CD4-positive, alpha-beta memory T cell (primary cell): ENCODE measurements at regions of chr3 and their contacts with region 1.

Region 1: DNA sequence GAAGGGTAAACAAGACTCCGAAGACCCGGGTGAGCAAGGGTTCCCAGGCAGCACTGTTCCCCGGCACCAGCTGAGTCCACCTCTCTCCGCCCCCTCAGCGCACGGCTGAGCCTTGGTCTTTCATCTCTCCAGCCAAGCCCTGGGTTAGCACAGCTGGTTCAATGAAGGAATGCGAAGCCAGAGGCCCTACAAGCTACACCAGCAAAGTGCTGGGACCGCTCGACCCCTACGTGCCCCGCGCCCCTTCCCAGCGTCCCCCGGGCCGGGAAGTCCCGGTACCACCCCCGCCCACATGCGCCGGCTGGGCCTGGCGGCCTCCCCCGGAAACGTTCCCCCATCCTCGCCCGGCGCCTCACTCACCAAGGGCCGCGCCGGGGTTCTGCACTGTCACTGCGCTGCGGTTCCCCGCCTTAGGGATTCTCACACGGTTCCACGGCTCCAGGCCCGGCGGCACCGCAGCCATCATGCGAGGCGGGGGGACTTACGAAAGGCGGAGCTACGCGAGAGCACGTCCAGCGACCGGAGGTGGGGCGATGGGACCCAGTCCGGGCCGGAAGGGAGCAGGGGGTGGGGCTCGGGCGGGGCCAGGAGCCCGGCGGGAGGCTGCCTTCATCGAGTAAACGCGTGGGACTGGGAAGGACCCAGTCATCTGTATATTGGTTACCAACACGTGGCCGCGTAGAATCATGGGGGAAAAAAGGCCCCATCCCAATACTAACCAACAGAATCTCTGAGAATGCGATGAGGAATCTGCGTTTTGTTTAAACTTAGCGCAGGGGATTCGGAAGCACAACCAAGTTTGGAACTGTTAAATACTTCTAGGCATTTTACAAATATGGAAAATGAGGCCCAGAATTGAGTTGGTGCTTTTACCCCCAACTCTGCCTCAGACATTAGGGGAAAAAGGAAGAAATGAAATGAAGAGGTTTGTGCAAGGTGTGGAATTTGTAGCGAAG is 28.7 kb downstream of the GTPBP8 start:
- DNase-seq: peak; percentile 76 to 89 (median 81)
- H3K4me3 ChIP-seq: peak overlapping the region; percentile 59 to 89
- H3K4me3 Mint-ChIP-seq: peak overlapping the region; percentile 92 to 97 (median 96)
- H3K27ac ChIP-seq: peak overlapping the region; percentile 89
- H3K27ac Mint-ChIP-seq: peak overlapping the region; percentile 91 to 98 (median 95)
- H3K4me1 ChIP-seq: peaks cover 45% of the 10 kb centered on the region
- H3K4me1 Mint-ChIP-seq: peaks cover 42 to 76% (median 61%) of the 10 kb centered on the region in 4 donors
- H3K27me3 ChIP-seq: no peaks in the 10 kb centered on the region
- H3K27me3 Mint-ChIP-seq: no peaks in the 10 kb centered on the region

Region 2: DNA sequence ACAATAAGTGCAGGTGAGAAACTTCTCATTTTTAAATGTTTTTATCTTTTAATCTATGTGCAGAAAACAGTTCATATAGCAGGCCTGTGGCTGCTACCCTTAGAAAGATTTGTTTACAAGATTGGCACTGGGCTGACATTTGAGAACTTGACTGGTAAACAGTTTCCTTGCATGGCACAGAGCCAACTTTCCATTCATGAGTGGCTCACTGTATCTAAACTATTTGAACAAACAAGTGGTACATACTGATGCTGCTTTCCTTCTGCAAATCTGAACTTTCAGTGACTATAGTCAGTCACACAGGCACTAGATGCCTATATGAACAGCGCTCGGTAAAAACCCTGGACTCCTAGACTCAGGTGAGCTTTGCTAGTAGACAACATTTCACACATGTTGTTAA is 35.0 kb before region 1 on chr3:
- CTCF ChIA-PET with region 1: interaction called, 4 read pairs
- POLR2A ChIA-PET with region 1: interaction called, 11 read pairs
- intact Hi-C with region 1: loop called (anchors 5 kb)
- DNase-seq: peak; percentile 47 to 84 (median 54)
- H3K4me3 ChIP-seq: no peak overlapping the region
- H3K4me3 Mint-ChIP-seq: peak overlapping the region in 4 of 8 donors; percentile 7 to 45 (median 32)
- H3K27ac ChIP-seq: peak overlapping the region; percentile 1
- H3K27ac Mint-ChIP-seq: peak overlapping the region; percentile 53 to 95 (median 77)
- H3K4me1 ChIP-seq: peaks cover 39% of the 10 kb centered on the region
- H3K4me1 Mint-ChIP-seq: peaks cover 37 to 65% (median 51%) of the 10 kb centered on the region in 4 donors
- H3K27me3 ChIP-seq: no peaks in the 10 kb centered on the region
- H3K27me3 Mint-ChIP-seq: no peaks in the 10 kb centered on the region

Region 3: DNA sequence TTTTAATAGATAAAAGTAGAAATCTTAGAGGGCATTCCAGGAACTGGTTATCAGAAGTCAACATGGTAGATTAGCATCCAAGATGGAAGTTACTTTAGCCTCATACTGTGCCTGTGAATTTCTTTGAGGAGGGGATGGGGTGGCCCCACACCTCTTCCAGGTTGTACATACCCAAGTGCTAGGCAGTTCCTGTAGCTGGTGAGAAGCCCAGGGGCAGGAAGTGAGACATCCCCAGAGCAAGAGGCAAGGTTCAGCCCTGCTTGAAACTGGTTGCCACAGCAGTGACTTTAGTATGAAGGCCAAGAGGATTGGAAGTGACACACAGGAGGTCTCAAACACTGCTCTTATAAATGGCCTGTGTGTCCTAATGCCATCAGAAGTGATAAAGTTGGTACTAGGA is 16.8 kb before region 1 on chr3:
- CTCF ChIA-PET with region 1: interaction called, 5 read pairs
- POLR2A ChIA-PET with region 1: interaction called, 33 read pairs
- intact Hi-C with region 1: loop called (anchors 1 kb)
- DNase-seq: peak; percentile 26 to 66 (median 29)
- H3K4me3 ChIP-seq: no peak overlapping the region
- H3K4me3 Mint-ChIP-seq: peak overlapping the region in 4 of 8 donors; percentile 11 to 57 (median 23)
- H3K27ac ChIP-seq: peak overlapping the region; percentile 29
- H3K27ac Mint-ChIP-seq: peak overlapping the region; percentile 75 to 89 (median 84)
- H3K4me1 ChIP-seq: peaks cover 66% of the 10 kb centered on the region
- H3K4me1 Mint-ChIP-seq: peaks cover 45 to 64% (median 55%) of the 10 kb centered on the region in 4 donors
- H3K27me3 ChIP-seq: no peaks in the 10 kb centered on the region
- H3K27me3 Mint-ChIP-seq: no peaks in the 10 kb centered on the region

Region 4: DNA sequence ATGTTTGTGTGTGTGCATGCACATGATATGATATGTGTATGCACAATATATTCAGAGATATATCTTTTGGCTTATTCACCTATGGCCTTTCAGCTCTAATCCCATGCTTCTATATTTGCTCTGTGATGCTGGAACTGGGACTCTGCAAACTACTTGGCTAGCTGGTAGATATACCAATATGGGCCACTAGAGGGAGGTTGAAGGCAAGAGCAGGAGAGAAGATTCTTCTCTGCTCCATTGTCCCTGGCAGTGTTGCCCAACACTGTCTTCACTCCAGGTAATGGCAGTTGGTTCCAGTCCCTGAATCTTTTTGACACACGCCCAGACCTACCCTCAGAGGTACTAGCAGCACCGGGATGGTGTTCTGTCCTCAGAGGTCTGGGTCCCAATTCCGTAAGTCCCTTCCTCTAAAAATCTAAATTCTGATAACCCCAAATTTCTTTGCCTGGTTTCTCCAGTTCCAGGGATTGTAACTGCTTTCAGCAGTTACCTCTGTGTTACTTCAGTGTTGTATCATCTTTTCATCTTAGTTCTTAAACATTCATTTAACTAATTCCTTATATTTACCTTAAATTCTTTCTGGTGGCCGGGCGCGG is 16.0 kb after region 1 on chr3:
- CTCF ChIA-PET with region 1: interaction called, 23 read pairs
- POLR2A ChIA-PET with region 1: interaction called, 4 read pairs
- intact Hi-C with region 1: no loop called
- DNase-seq: peak; percentile 34 to 58 (median 49)
- H3K4me3 ChIP-seq: no peak overlapping the region
- H3K4me3 Mint-ChIP-seq: no peak overlapping the region
- H3K27ac ChIP-seq: no peak overlapping the region
- H3K27ac Mint-ChIP-seq: no peak overlapping the region
- H3K4me1 ChIP-seq: no peaks in the 10 kb centered on the region
- H3K4me1 Mint-ChIP-seq: peaks cover 0 to 5% (median 1%) of the 10 kb centered on the region in 4 donors
- H3K27me3 ChIP-seq: no peaks in the 10 kb centered on the region
- H3K27me3 Mint-ChIP-seq: no peaks in the 10 kb centered on the region

Region 5: DNA sequence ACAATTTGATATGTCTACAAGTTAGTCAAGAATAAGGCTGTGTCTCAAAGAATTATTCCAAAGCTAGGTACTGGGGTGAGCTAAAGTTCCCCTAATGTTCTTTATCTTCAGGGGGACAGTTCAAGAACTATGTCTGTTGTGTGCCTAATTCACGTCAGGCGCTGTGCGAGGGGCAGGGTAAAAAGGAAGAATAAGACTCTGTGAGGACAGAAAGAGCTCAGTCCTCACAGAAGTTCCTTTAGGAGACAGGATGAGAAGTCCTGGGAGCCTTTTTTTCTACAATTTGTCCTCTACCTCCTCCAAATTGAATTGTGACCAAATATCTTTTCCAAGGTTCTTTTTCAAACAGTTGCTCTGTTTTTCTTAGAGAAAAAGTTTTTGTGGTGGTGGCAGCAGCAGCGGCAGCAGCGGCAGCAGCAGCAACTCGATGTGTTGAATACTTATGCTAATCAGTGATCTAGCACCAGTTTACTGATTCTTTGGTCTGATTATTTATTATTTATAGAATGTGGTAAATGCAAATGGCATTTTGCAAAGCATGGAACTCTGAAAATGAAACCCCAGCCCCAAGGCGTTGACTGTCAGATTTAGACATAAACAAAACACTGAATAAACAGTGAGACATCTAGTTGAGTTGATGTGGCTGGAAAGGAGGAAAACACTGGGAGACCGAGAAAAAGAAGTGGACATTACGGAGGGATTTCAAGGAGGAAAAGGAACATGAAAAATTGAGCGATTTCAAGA is 59.9 kb after region 1 on chr3:
- CTCF ChIA-PET with region 1: no interaction called
- POLR2A ChIA-PET with region 1: no interaction called
- intact Hi-C with region 1: no loop called
- DNase-seq: no peak
- H3K4me3 ChIP-seq: no peak overlapping the region
- H3K4me3 Mint-ChIP-seq: no peak overlapping the region
- H3K27ac ChIP-seq: no peak overlapping the region
- H3K27ac Mint-ChIP-seq: peak overlapping the region in 1 of 7 donors; percentile 36
- H3K4me1 ChIP-seq: no peaks in the 10 kb centered on the region
- H3K4me1 Mint-ChIP-seq: peaks cover 0 to 2% (median 0%) of the 10 kb centered on the region in 4 donors
- H3K27me3 ChIP-seq: no peaks in the 10 kb centered on the region
- H3K27me3 Mint-ChIP-seq: no peaks in the 10 kb centered on the region